ENCODE measurements at regions of chr19 and their contacts with region 1.

Region 1: DNA sequence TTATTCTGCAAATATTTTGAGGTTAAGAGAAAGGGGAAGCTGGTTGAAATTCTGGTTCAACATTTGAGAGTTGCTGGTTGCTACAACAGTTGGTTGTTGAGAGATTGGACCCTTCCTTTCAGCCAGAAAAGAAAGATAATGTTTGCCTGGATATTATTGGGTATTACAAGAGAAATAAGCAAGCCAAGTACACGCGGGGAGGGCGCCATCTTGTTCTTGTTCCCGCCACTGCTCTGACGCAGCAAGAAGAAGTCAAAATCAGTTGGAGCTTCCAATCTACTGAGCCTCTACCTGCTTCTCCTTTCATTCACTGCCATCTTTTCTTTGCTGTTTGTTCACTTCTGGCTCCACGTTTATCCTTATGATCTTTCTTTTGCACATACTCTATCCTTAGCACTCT is 18.4 kb downstream of the BSPH1 start:
- DNase-seq: no peak
- ATAC-seq: no peak
- H3K4me3 Mint-ChIP-seq: no peak overlapping the region
- H3K27ac Mint-ChIP-seq: no peak overlapping the region
- H3K4me1 Mint-ChIP-seq: no peaks in the 10 kb centered on the region
- H3K27me3 Mint-ChIP-seq: peaks cover 28% of the 10 kb centered on the region
- CTCF ChIP-seq: no peak

Region 2: DNA sequence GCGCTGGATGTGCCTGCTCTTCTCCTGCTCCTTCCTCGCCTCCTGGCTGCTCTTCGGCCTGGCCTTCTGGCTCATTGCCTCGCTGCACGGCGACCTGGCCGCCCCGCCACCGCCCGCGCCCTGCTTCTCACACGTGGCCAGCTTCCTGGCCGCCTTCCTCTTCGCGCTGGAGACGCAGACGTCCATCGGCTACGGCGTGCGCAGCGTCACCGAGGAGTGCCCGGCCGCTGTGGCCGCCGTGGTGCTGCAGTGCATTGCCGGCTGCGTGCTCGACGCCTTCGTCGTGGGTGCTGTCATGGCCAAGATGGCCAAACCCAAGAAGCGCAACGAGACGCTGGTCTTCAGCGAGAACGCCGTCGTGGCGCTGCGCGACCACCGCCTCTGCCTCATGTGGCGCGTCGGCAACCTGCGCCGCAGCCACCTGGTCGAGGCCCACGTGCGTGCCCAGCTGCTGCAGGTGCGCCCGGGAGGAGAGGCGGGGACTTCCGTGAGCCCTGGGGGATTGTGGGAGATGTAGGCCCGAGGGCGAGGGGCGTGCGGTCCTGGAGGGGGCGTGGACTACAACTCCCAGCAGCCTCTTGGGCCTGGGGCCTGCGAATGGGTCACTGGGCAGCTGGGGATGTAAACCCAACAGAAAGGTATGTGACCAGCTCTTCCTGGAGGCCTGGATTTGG is 488.6 kb after region 1 on chr19:
- CTCF ChIA-PET with region 1: no interaction called
- POLR2A ChIA-PET with region 1: interaction called, 10 read pairs
- intact Hi-C with region 1: no loop called
- DNase-seq: no peak
- ATAC-seq: peak; percentile 34
- H3K4me3 Mint-ChIP-seq: no peak overlapping the region
- H3K27ac Mint-ChIP-seq: no peak overlapping the region
- H3K4me1 Mint-ChIP-seq: peaks cover 2% of the 10 kb centered on the region
- H3K27me3 Mint-ChIP-seq: no peaks in the 10 kb centered on the region
- CTCF ChIP-seq: no peak